Endothelial cell of umbilical vein (primary cell): ENCODE measurements at regions of chr5 and their contacts with region 1.

Region 1: DNA sequence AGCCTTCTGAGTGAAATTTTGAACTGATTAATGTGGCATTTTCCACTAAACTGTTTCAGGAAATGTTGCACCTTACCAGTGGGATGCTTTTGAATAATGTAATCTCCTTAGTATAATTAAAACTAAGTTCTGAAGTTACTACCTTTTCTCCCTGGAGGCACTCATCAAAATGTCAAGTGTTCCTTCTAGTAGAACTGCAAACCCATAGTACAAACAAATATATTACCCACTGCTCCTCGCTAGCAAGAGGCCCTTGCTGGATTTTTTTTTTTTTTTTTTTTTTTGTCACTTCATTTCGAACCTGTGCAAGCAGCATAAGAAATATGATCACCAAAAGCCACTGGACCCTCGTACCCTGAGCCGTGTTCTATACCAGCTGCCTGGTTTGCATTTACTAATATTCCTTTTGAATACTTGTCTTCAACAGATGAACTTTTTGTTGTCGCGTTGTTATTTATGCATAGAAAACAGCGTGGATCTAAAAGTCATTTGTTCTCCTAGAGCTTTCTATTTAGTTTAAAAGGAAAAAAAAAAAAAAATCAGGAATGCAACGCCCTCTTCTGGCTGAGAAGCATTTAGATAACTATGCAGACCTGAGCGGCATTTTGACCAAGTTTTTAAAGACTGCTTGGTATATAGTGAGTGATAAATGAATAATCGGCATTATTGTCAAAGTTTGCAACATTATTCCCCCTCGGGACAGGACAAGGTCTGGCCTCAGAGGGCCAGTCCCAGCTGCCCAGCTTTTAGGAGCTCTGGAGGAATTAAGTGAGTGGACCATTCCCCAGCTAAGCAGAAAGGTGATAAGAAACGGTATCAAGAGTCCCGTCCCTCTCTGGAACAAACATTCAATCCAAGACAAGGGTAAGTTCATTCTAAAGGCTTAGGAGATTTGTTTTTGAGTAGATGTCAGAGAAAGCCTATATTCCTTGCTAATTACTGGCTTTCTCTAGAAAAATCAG is 162.5 kb upstream of the KIF2A start:
- DNase-seq: peak; percentile 33
- H3K4me3 ChIP-seq: no peak overlapping the region
- H3K27ac ChIP-seq: no peak overlapping the region
- H3K4me1 ChIP-seq: peaks cover 3% of the 10 kb centered on the region
- H3K27me3 ChIP-seq: peaks cover 13 to 33% of the 10 kb centered on the region in 2 experiments
- CTCF ChIP-seq: peak; percentile 41 to 47
- POLR2A ChIP-seq: no peak

Region 2: GRCh38 chr5:62130100-62130499 is 13.4 kb before region 1 on chr5:
- CTCF ChIA-PET with region 1: interaction called, 12 read pairs
- POLR2A ChIA-PET with region 1: interaction called, 3 read pairs
- dilution Hi-C with region 1: no loop called
- intact Hi-C with region 1: no loop called
- DNase-seq: no peak
- H3K4me3 ChIP-seq: no peak overlapping the region
- H3K27ac ChIP-seq: no peak overlapping the region
- H3K4me1 ChIP-seq: no peaks in the 10 kb centered on the region
- H3K27me3 ChIP-seq: no peaks in the 10 kb centered on the region
- CTCF ChIP-seq: no peak
- POLR2A ChIP-seq: no peak

Region 3: DNA sequence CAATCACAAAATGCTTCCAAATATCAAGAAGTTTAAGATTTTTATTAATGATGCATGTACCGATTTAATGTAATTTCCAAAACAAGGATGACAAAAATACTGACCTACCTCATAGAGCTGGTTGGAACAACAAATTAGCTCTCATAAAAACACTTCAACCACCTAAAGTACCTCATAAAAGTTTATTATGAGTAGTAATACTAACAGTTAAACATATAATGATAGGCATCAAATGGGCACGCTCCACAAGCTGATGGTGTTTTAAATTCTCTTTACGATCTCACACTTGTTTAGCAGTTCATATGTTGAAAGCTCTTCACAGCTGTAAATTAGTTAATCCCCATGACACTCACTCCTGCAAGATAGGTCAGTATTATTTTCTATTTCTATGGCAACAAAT is 12.4 kb after region 1 on chr5:
- CTCF ChIA-PET with region 1: interaction called, 12 read pairs
- POLR2A ChIA-PET with region 1: no interaction called
- dilution Hi-C with region 1: no loop called
- intact Hi-C with region 1: no loop called
- DNase-seq: no peak
- H3K4me3 ChIP-seq: no peak overlapping the region
- H3K27ac ChIP-seq: no peak overlapping the region
- H3K4me1 ChIP-seq: no peaks in the 10 kb centered on the region
- H3K27me3 ChIP-seq: no peaks in the 10 kb centered on the region
- CTCF ChIP-seq: no peak
- POLR2A ChIP-seq: no peak